OCI-LY7 (cell line): ENCODE measurements at regions of chr1 and their contacts with region 1.

Region 1: DNA sequence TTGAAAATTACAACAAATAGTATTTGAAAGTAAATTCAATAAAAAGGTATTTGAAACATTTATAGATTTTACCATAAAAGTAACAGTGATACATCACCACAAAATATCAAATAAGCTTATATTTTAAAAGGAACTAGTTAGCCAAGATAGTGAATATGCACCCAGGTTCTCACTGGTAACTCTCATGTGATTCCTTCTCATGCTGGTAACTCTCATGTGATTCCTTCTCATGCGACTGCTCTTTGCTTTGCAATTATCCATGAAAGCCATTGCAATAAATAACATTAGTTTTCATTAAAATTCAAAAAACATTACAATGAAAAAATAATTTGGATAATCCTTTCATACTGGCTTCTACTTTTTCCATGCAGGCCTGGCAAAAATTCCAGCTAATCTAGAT is 75.4 kb downstream of the AHCTF1 start:
- DNase-seq: no peak
- H3K4me3 ChIP-seq: no peak overlapping the region
- H3K27ac ChIP-seq: no peak overlapping the region
- H3K4me1 ChIP-seq: no peaks in the 10 kb centered on the region
- CTCF ChIP-seq: no peak

Region 2: DNA sequence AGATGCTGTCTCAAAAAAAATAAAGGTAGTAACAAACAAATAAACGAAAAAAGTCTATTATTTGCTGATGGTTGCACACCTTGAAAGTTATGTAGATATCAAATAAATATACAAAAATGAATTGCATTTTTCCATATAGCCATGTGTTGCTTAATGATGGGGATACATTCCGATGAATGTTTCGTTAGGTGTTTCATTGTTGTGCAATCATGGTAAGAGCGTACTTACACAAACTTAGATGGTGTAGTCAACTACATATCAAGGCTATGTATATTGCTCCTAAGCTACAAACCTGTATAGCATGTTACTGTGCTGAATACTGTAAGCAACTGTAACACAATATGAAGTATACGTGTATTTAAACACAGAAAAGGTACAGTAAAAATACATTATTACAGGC is 40.9 kb after region 1 on chr1:
- CTCF ChIA-PET with region 1: no interaction called
- POLR2A ChIA-PET with region 1: interaction called, 3 read pairs
- intact Hi-C with region 1: loop called (anchors 5 kb)
- DNase-seq: no peak
- H3K4me3 ChIP-seq: no peak overlapping the region
- H3K27ac ChIP-seq: no peak overlapping the region
- H3K4me1 ChIP-seq: no peaks in the 10 kb centered on the region
- CTCF ChIP-seq: no peak